Heart right ventricle (tissue), 16 donors: ENCODE measurements at regions of chr2 and their contacts with region 1.

Region 1: GRCh38 chr2:40455661-40456060 is 3.8 kb upstream of the SLC8A1 start:
- DNase-seq: no peak
- ATAC-seq: peak in 3 of 8 donors; percentile 20 to 44 (median 27)
- H3K4me3 ChIP-seq: no peak overlapping the region
- H3K27ac ChIP-seq: peak overlapping the region in 6 of 10 donors; percentile 7 to 87 (median 46)
- H3K4me1 ChIP-seq: peaks cover 0 to 76% (median 41%) of the 10 kb centered on the region in 9 donors
- H3K27me3 ChIP-seq: no peaks in the 10 kb centered on the region
- CTCF ChIP-seq: no peak

Region 2: GRCh38 chr2:40511661-40512213 is 56.1 kb after region 1 on chr2:
- intact Hi-C with region 1: loop called in 3 of 10 experiments (anchors 5 to 10 kb)
- DNase-seq: peak in 1 of 2 donors; percentile 36
- ATAC-seq: peak; percentile 15 to 68 (median 50)
- H3K4me3 ChIP-seq: peak overlapping the region; percentile 22 to 65 (median 53)
- H3K27ac ChIP-seq: peak overlapping the region; percentile 61 to 96 (median 90)
- H3K4me1 ChIP-seq: peaks cover 0 to 40% (median 18%) of the 10 kb centered on the region in 9 donors
- H3K27me3 ChIP-seq: no peaks in the 10 kb centered on the region
- CTCF ChIP-seq: no peak

Region 3: GRCh38 chr2:40579247-40579646 is 123.6 kb after region 1 on chr2:
- intact Hi-C with region 1: no loop called
- DNase-seq: no peak
- ATAC-seq: no peak
- H3K4me3 ChIP-seq: no peak overlapping the region
- H3K27ac ChIP-seq: no peak overlapping the region
- H3K4me1 ChIP-seq: no peaks in the 10 kb centered on the region
- H3K27me3 ChIP-seq: no peaks in the 10 kb centered on the region
- CTCF ChIP-seq: no peak